Esophagus squamous epithelium (tissue), 5 donors: ENCODE measurements at regions of chr1 and their contacts with region 1.

Region 1: DNA sequence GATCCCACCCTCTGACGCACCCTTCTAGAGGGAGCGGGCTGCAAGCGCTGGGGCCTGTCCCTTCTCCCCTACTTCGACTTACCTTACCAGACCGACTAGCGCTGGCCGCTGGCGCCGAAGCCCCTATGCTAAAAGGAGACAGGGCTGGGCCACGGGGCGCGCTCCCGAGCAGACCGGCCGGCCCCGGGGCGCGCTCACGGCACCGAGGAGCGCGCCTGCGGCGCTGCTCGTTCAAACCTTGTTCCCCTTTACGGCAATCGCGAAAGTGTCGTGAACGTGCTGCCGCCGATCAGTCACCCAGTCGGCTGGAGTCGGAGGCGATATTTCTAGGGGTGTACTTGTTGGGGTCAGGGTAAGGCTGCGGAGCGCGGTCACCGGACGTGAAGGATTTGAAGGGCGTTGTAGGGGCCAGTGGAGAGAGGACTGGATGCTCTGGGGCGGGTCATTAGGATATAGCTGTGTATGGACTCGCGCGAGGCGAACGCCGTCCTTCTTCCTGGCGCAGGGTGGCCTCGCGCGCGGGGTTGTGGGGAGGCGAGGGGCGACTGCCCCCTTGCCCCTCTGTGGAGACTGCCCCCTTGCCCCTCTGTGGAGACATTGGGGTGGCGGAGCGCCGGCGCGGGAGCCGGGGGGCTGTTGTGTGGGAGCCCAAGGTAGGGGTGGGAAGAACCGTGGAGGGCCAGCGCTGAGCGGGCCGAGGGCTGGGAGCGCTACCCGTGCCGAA is at the starts of genes CEPT1 and DRAM2:
- DNase-seq: peak; percentile 84
- H3K4me3 ChIP-seq: peak within 1 kb of the TSS; percentile 84 to 97 (median 90)
- H3K27ac ChIP-seq: peak within 1 kb of the TSS; percentile 90 to 99 (median 97)
- H3K4me1 ChIP-seq: peaks cover 3 to 63% (median 32%) of the 10 kb centered on the region in 3 donors
- H3K27me3 ChIP-seq: no peaks in the 10 kb centered on the region
- CTCF ChIP-seq: no peak
- POLR2A ChIP-seq: peak in 3 of 4 donors; percentile 7 to 81 (median 51)
- total RNA-seq, gene CEPT1: 21.4 to 32.4 (median 26.8) TPM
- total RNA-seq, gene DRAM2: 15.4 to 53.6 (median 26.9) TPM

Region 2: GRCh38 chr1:111197598-111198284 is 57.6 kb after region 1 on chr1:
- intact Hi-C with region 1: loop called (anchors 10 kb)
- DNase-seq: no peak
- H3K4me3 ChIP-seq: peak overlapping the region in 3 of 4 donors; percentile 35 to 88 (median 58)
- H3K27ac ChIP-seq: peak overlapping the region in 1 of 4 donors; percentile 96
- H3K4me1 ChIP-seq: peaks cover 45 to 100% (median 52%) of the 10 kb centered on the region in 3 donors
- H3K27me3 ChIP-seq: no peaks in the 10 kb centered on the region
- CTCF ChIP-seq: peak in 1 of 6 experiments; percentile 21
- POLR2A ChIP-seq: no peak